Right cardiac atrium (tissue), 5 donors: ENCODE measurements at regions of chr9 and their contacts with region 1.

Region 1: DNA sequence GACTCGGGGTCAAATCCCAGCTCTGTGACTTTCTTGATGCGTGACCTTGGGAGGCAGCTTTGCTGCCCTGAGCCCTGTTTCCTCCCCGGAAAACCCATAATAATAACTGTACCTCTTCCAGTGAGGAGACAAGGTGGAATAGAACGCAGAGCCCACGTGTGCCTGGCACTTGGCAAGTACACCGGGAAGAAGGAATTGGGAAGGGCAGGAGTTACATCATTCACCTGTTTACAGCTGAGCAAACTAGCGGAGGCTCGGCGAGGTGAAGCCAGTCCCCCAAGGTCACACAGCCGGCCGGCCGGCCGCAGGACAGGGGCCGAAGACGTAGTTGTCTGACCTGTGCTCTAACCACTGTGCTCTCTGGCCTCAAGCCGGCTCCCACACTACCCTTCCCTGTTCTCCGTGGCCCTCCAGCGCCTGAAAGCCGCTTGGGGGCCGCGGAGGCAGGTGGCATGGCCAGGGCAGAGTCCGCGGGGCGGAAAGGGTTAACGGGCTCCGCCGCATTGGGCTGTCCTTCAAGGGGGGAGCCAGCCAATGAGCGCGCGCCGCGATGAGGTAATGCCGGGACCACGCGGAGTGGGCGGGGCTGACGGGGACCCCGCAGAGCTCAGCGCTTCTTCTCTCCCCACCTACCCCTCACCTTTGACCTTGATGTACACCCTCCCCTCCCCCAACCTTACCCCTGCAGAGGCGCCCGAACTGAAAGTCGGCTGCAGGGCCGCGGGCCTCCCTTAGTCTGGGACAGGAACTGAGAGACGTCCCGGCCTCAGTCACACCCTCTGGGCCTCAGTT is 125.2 kb downstream of the C9orf50 start:
- DNase-seq: peak; percentile 96 to 99 (median 99)
- ATAC-seq: peak; percentile 88
- H3K4me3 ChIP-seq: peak overlapping the region; percentile 76
- H3K27ac ChIP-seq: peak overlapping the region; percentile 95
- H3K4me1 ChIP-seq: peaks cover 2% of the 10 kb centered on the region
- H3K27me3 ChIP-seq: no peaks in the 10 kb centered on the region

Region 2: GRCh38 chr9:129177791-129178559 is 317.8 kb before region 1 on chr9 and contains the start of gene IER5L:
- intact Hi-C with region 1: loop called in 3 of 4 experiments (anchors 5 to 10 kb)
- DNase-seq: peak; percentile 96 to 98 (median 98)
- ATAC-seq: peak; percentile 86 to 88
- H3K4me3 ChIP-seq: peak within 1 kb of the TSS; percentile 72
- H3K27ac ChIP-seq: peak within 1 kb of the TSS; percentile 90
- H3K4me1 ChIP-seq: no peaks in the 10 kb centered on the region
- H3K27me3 ChIP-seq: no peaks in the 10 kb centered on the region
- total RNA-seq, gene IER5L: 6.7 to 9.4 (median 8.7) TPM

Region 3: GRCh38 chr9:129270903-129271431 is 224.8 kb before region 1 on chr9:
- intact Hi-C with region 1: no loop called
- DNase-seq: peak in 1 of 3 donors; percentile 4
- ATAC-seq: peak in 1 of 2 donors; percentile 22
- H3K4me3 ChIP-seq: no peak overlapping the region
- H3K27ac ChIP-seq: no peak overlapping the region
- H3K4me1 ChIP-seq: no peaks in the 10 kb centered on the region
- H3K27me3 ChIP-seq: no peaks in the 10 kb centered on the region

Region 4: GRCh38 chr9:129550199-129550839 is 54.6 kb after region 1 on chr9:
- intact Hi-C with region 1: loop called in 2 of 4 experiments (anchors 5 to 10 kb)
- DNase-seq: peak; percentile 90 to 96 (median 96)
- ATAC-seq: peak; percentile 89 to 90
- H3K4me3 ChIP-seq: peak overlapping the region; percentile 39
- H3K27ac ChIP-seq: no peak overlapping the region
- H3K4me1 ChIP-seq: peaks cover 7% of the 10 kb centered on the region
- H3K27me3 ChIP-seq: no peaks in the 10 kb centered on the region

Region 5: GRCh38 chr9:129602598-129603415 is 107.1 kb after region 1 on chr9:
- intact Hi-C with region 1: loop called (anchors 5 to 10 kb)
- DNase-seq: peak in 2 of 3 donors; percentile 67 to 76
- ATAC-seq: no peak
- H3K4me3 ChIP-seq: no peak overlapping the region
- H3K27ac ChIP-seq: no peak overlapping the region
- H3K4me1 ChIP-seq: peaks cover 2% of the 10 kb centered on the region
- H3K27me3 ChIP-seq: no peaks in the 10 kb centered on the region

Region 6: GRCh38 chr9:130034570-130034969 is 538.8 kb after region 1 on chr9:
- intact Hi-C with region 1: no loop called
- DNase-seq: no peak
- ATAC-seq: peak; percentile 37 to 48
- H3K4me3 ChIP-seq: no peak overlapping the region
- H3K27ac ChIP-seq: no peak overlapping the region
- H3K4me1 ChIP-seq: no peaks in the 10 kb centered on the region
- H3K27me3 ChIP-seq: no peaks in the 10 kb centered on the region